Left ventricle myocardium superior (tissue), 1 donor: ENCODE measurements at regions of chr4 and their contacts with region 1.

Region 1: GRCh38 chr4:7802093-7802726 is 137.5 kb downstream of the AFAP1 start:
- DNase-seq: peak; percentile 83
- ATAC-seq: peak; percentile 49

Region 2: GRCh38 chr4:7761720-7762119 is 40.5 kb before region 1 on chr4:
- intact Hi-C with region 1: loop called (anchors 5 kb)
- DNase-seq: peak; percentile 91
- ATAC-seq: peak; percentile 89

Region 3: GRCh38 chr4:7987148-7987989 is 185.2 kb after region 1 on chr4:
- intact Hi-C with region 1: loop called (anchors 10 kb)
- DNase-seq: peak; percentile 72
- ATAC-seq: peak; percentile 81